Aorta (tissue), 5 donors: ENCODE measurements at regions of chr1 and their contacts with region 1.

Region 1: DNA sequence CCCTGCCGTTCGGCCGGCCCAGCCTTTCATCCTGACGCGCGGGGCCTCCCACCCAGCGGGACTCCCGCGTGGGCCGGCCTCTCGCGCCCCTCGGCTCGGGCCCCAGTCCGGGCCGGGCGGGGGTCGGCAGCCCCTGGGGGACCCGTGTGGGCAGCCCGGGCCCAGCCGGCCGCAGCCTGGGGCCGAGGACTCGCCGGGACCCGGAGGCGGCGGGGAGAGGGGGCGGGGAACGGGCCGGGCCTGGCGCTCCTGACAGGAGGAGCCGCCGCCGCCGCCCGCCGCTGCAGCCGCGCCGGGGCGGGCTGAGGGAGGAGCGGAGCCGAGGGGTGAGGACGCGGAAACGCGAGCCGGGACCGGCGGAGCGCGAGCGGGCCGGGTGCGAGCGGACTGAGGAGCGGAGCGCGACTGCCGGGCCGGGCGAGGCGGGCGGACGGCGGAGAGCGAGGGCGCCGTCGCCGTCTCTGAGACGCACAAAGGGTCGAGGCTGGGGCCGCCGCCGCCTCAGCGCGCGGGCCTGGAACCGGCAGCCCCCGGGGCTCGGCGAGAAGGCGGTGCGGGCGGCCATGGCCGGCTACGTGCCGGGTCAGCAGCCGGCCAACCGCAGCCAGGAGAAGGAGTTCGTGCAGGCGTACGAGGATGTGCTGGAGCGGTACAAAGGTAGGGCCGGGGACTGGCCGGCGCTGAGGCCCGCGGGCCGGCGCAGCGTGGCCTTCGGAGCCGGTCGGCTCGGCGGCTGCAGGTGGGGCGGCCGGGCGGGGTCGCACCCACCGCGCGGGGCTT is 79.1 kb downstream of the NDUFS5 start:
- DNase-seq: peak; percentile 86 to 94
- ATAC-seq: peak; percentile 85
- H3K4me3 ChIP-seq: peak overlapping the region; percentile 42 to 79
- H3K27ac ChIP-seq: peak overlapping the region; percentile 87 to 88
- H3K4me1 ChIP-seq: peaks cover 1 to 2% of the 10 kb centered on the region in 2 donors
- H3K27me3 ChIP-seq: no peaks in the 10 kb centered on the region

Region 2: GRCh38 chr1:39170731-39171667 is 65.7 kb after region 1 on chr1:
- intact Hi-C with region 1: loop called in 1 of 2 experiments (anchors 5 kb)
- DNase-seq: no peak
- ATAC-seq: no peak
- H3K4me3 ChIP-seq: no peak overlapping the region
- H3K27ac ChIP-seq: no peak overlapping the region
- H3K4me1 ChIP-seq: peaks cover 10 to 19% of the 10 kb centered on the region in 2 donors
- H3K27me3 ChIP-seq: no peaks in the 10 kb centered on the region

Region 3: GRCh38 chr1:39189592-39190041 is 84.4 kb after region 1 on chr1:
- intact Hi-C with region 1: loop called (anchors 2 to 5 kb)
- DNase-seq: no peak
- ATAC-seq: no peak
- H3K4me3 ChIP-seq: no peak overlapping the region
- H3K27ac ChIP-seq: peak overlapping the region in 1 of 2 donors; percentile 87
- H3K4me1 ChIP-seq: peaks cover 0 to 2% of the 10 kb centered on the region in 2 donors
- H3K27me3 ChIP-seq: no peaks in the 10 kb centered on the region

Region 4: DNA sequence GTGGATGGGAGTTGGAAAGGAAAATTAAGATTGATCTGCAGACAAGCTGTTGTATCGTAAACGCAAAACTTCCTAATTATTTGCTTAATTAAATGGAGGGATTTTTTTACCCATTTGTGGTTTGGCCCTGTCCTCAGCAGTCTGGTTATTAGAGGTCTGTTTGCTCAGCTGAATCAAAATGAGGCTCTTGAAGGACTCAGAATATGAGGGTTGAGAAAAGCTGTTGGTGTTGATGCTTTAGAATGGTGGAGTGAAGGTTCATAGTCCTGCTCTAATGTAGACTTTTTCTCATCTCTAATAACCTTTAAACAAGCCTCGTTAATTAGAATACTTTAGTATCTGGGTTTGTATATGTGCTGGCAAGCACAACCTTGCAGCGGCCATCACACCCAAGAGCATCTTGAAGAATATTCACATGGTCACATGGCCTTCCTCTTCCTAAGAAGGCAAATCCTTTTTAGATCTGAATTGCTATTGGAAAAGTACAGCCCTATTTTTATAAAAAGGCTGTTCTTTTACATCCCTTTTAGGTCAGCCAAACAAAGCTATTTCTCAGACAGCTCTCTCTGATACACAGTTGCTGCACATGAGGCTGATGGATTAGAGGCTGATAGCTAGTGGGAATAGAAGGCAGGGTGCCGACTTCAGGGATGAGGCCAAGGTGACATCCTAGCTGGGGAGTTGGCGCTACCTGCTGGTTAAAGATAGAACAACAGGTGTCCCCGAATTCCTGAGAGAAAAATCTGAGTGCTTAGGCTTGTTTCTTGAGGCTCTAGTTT is 153.1 kb after region 1 on chr1:
- intact Hi-C with region 1: loop called (anchors 5 kb)
- DNase-seq: peak; percentile 66 to 83
- ATAC-seq: peak; percentile 84
- H3K4me3 ChIP-seq: no peak overlapping the region
- H3K27ac ChIP-seq: peak overlapping the region in 1 of 2 donors; percentile 84
- H3K4me1 ChIP-seq: peaks cover 2 to 3% of the 10 kb centered on the region in 2 donors
- H3K27me3 ChIP-seq: no peaks in the 10 kb centered on the region

Region 5: GRCh38 chr1:39317910-39318633 is 212.8 kb after region 1 on chr1:
- intact Hi-C with region 1: no loop called
- DNase-seq: no peak
- ATAC-seq: no peak
- H3K4me3 ChIP-seq: no peak overlapping the region
- H3K27ac ChIP-seq: no peak overlapping the region
- H3K4me1 ChIP-seq: no peaks in the 10 kb centered on the region
- H3K27me3 ChIP-seq: no peaks in the 10 kb centered on the region

Region 6: DNA sequence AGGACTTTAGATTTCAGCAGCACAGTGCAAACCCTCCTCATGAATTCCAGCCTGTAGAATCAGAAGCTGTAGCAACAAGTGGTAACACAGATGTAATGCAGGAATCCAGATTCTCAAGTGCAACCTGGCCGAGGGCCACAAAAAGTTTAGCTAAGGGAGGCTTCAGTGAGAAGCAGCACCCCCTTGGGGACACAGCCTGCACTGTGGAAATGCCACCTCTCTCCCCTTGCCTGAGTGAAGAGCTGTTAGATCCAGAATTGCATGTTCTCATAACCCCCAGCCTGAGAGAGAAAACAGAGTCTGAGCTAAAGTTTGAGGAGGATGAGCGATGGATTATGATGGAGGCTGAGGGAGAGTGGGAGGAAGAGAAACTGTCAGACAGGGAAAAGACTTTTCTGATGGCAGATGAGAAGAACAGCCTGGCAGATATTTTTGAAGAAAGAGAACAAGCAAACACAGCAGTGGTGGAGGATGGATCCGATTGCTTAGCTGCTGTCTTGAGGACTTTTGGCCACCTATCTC is 305.7 kb after region 1 on chr1:
- intact Hi-C with region 1: loop called (anchors 5 to 10 kb)
- DNase-seq: peak; percentile 88 to 91
- ATAC-seq: peak; percentile 47
- H3K4me3 ChIP-seq: peak overlapping the region; percentile 37 to 55
- H3K27ac ChIP-seq: peak overlapping the region; percentile 7 to 78
- H3K4me1 ChIP-seq: peaks cover 4 to 9% of the 10 kb centered on the region in 2 donors
- H3K27me3 ChIP-seq: no peaks in the 10 kb centered on the region